Posterior cingulate gyrus (tissue), 11 donors: ENCODE measurements at regions of chr19 and their contacts with region 1.

Region 1: GRCh38 chr19:35044317-35045117 is 3.0 kb downstream of the HPN start:
- DNase-seq: peak; percentile 66 to 96 (median 88)

Region 2: GRCh38 chr19:34426096-34426661 is 618.3 kb before region 1 on chr19:
- intact Hi-C with region 1: no loop called
- DNase-seq: peak in 1 of 10 donors; percentile 67

Region 3: DNA sequence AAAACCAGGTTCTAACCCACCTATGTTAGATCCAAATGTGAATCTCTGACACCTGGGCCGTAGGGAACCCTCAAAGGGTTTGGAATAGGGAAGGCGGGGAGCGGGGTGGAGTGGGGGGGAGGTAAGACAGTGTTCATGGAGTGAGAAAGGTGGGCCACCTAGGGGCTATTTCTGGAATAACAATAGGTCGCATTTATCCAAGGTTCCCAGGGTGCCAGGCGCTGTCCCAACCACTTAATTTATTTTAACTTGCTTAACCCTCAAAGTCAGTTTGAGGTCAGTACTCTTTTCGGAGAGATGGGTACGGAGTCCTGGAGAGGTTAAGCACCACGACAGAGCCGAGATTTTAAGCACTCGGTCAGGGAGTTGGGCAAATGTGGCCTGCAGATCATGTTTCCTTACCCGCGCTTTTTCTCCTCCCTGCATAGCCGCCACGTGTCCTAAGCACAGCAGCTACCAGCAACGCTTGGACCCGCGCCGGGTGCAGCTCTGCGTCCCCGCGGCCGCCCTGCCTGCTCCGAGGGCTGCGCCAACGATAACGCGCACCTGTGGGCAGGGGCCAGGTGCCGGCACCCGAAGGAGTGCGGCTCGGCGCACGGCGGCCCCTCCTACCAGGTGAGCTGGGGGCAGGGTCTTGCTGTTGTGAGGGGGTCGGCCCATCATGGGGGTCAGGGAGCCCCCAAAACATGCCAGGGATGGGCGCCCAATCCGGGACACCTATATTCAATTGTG is 46.2 kb after region 1 on chr19:
- intact Hi-C with region 1: loop called (anchors 10 kb)
- DNase-seq: peak in 6 of 10 donors; percentile 42 to 88 (median 58)

Region 4: DNA sequence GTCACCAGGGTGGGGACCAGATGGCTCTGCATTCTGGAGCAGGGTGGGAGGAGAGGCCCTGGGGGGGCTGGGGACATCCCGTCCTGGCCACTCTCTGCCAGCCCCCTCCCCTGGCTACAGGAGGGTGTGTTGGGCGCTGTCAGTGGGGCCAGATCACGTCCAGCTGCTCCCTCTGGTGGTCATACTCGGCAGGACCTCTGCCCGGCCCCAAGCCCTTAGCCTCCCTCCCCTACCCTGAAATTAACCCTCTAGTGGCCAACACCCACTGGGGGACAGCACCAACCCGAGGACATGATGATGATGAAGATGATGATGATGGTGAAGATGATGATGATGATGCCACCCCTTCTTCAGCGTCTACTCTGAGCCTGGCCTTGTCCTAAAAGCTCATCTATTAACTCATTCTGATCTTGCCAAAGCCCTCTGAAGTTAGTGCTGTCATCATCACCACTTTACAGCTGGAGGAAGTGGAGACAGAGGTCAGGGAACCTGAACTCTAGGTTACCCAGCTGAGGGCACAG is 90.9 kb after region 1 on chr19:
- intact Hi-C with region 1: loop called (anchors 5 kb)
- DNase-seq: peak in 9 of 10 donors; percentile 79 to 97 (median 84)